Common myeloid progenitor, CD34-positive (primary cell): ENCODE measurements at regions of chr3 and their contacts with region 1.

Region 1: GRCh38 chr3:160707187-160707794 is 30.3 kb downstream of the ARL14 start:
- DNase-seq: peak; percentile 57 to 84 (median 76)
- H3K4me3 ChIP-seq: no peak overlapping the region
- H3K27ac ChIP-seq: no peak overlapping the region
- H3K4me1 ChIP-seq: no peaks in the 10 kb centered on the region
- H3K27me3 ChIP-seq: peaks cover 0 to 5% (median 0%) of the 10 kb centered on the region in 5 experiments

Region 2: GRCh38 chr3:160754855-160755747 is 47.8 kb after region 1 on chr3:
- CTCF ChIA-PET with region 1: interaction called, 13 read pairs
- POLR2A ChIA-PET with region 1: no interaction called
- DNase-seq: peak; percentile 92 to 97 (median 96)
- H3K4me3 ChIP-seq: peak overlapping the region; percentile 87 to 94 (median 92)
- H3K27ac ChIP-seq: peak overlapping the region; percentile 84 to 91
- H3K4me1 ChIP-seq: peaks cover 16 to 39% (median 34%) of the 10 kb centered on the region in 4 experiments
- H3K27me3 ChIP-seq: no peaks in the 10 kb centered on the region

Region 3: GRCh38 chr3:160931474-160931873 is 224.2 kb after region 1 on chr3:
- CTCF ChIA-PET with region 1: interaction called, 14 read pairs
- POLR2A ChIA-PET with region 1: no interaction called
- DNase-seq: no peak
- H3K4me3 ChIP-seq: no peak overlapping the region
- H3K27ac ChIP-seq: no peak overlapping the region
- H3K4me1 ChIP-seq: peaks cover 0 to 2% (median 0%) of the 10 kb centered on the region in 4 experiments
- H3K27me3 ChIP-seq: no peaks in the 10 kb centered on the region

Region 4: GRCh38 chr3:160941885-160942494 is 234.7 kb after region 1 on chr3:
- CTCF ChIA-PET with region 1: interaction called, 28 read pairs
- POLR2A ChIA-PET with region 1: no interaction called
- DNase-seq: peak; percentile 76 to 90 (median 84)
- H3K4me3 ChIP-seq: no peak overlapping the region
- H3K27ac ChIP-seq: no peak overlapping the region
- H3K4me1 ChIP-seq: no peaks in the 10 kb centered on the region
- H3K27me3 ChIP-seq: no peaks in the 10 kb centered on the region

Region 5: GRCh38 chr3:160948272-160948671 is 241.0 kb after region 1 on chr3:
- CTCF ChIA-PET with region 1: interaction called, 17 read pairs
- POLR2A ChIA-PET with region 1: no interaction called
- DNase-seq: no peak
- H3K4me3 ChIP-seq: no peak overlapping the region
- H3K27ac ChIP-seq: no peak overlapping the region
- H3K4me1 ChIP-seq: no peaks in the 10 kb centered on the region
- H3K27me3 ChIP-seq: no peaks in the 10 kb centered on the region